AG04449 (cell line): ENCODE measurements at regions of chr14 and their contacts with region 1.

Region 1: DNA sequence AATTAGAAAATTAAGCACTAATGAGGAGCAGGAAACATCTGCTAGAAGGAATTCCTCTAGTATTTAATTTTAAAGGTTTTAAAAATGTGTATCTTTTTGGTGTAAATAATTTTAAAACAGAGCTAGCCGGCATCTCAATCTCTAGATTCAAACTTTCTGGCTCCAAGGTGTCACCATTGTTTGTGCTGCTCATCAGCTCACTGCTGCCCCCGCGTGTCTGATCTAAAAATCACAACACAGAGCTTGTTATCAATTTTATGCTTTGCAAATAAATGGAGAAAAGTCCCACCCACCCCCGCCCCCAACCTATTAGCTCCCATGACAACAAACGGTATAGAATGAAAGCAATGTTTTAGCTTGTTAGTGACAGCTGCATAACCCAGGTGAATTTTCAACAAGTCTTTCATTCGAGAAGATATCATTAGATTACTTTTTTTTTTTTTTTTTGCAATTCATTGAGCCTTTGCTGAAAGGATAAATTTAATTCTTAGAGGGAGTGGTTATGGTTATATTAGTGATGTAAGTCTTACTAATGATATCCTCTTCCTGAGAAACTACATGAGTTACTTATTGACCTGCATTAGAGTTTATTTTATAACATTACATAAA is 11.3 kb upstream of the ABHD12B start:
- DNase-seq: no peak
- H3K4me3 ChIP-seq: peak overlapping the region; percentile 57
- CTCF ChIP-seq: peak; percentile 65

Region 2: DNA sequence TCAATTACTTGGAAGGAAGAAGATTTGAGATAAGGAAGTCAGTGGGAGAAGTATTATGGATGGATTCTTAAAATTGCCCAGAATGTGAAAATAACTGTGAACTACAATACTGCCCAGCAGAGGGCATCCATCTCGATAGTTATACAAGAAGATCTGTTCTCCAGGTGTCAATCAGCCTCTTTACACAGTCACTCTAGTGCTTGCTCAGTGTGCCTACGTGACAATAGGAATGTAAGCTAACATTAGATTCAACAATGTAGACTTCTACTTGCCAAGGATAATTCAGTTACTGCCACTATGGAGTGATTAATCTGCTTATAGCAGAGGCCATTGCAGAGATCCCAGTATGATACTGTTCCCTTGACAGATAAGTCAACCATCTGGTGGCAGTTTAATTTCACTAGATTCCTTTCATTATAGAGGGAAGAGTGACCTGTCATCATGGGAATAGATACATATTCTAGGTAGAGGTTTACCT is 317.6 kb before region 1 on chr14:
- CTCF ChIA-PET with region 1: interaction called, 29 read pairs
- POLR2A ChIA-PET with region 1: no interaction called
- DNase-seq: no peak
- H3K4me3 ChIP-seq: no peak overlapping the region
- CTCF ChIP-seq: peak; percentile 47

Region 3: GRCh38 chr14:50599700-50600444 is 260.7 kb before region 1 on chr14:
- CTCF ChIA-PET with region 1: interaction called, 40 read pairs
- POLR2A ChIA-PET with region 1: no interaction called
- DNase-seq: no peak
- H3K4me3 ChIP-seq: no peak overlapping the region
- CTCF ChIP-seq: peak; percentile 45

Region 4: DNA sequence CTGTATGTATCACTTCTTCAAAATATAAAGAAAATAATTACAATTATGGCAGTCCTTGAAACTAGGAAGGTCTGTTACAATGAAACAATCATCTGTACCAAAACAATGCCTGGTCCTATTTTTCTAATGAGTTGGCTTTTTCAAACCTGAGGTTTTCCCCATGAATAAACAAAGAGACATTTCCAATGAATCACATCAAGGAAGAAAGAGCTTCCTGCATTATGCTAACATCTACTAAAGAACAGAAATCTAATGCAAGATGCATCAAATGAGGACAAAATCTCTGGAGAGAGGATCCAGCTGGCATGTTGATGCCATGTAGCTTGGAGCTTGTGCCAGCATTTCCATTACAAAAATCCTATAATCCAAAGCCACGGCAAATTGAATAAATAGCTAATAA is 58.9 kb before region 1 on chr14:
- CTCF ChIA-PET with region 1: interaction called, 13 read pairs
- POLR2A ChIA-PET with region 1: no interaction called
- DNase-seq: no peak
- H3K4me3 ChIP-seq: no peak overlapping the region
- CTCF ChIP-seq: no peak

Region 5: GRCh38 chr14:50846226-50846880 is 14.2 kb before region 1 on chr14:
- CTCF ChIA-PET with region 1: interaction called, 147 read pairs
- POLR2A ChIA-PET with region 1: interaction called, 5 read pairs
- DNase-seq: peak; percentile 83
- H3K4me3 ChIP-seq: no peak overlapping the region
- CTCF ChIP-seq: no peak